Common myeloid progenitor, CD34-positive (primary cell): ENCODE measurements at regions of chr17 and their contacts with region 1.

Region 1: DNA sequence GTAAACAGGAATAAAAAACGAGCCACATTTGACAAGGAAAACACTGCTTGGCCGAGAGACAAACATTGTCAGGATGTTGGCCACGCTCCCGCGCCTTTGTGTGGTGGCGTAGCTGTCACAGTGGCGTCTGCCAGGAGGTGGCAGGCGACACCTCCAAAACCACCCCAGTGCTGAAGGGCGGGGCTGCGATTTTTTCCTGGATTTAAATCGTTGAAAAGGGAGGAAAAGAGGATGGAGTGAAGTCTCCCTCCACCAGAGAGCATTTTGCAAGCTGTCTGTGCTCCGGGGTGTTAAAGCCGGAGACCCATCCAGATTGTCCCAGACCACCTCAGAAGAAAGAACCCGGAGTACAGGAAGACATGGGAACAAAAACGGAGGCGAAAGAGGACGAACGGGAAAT is 12.7 kb downstream of the MRM3 start:
- DNase-seq: peak; percentile 54 to 65 (median 60)
- H3K4me3 ChIP-seq: peak overlapping the region in 1 of 7 experiments; percentile 31
- H3K27ac ChIP-seq: no peak overlapping the region
- H3K4me1 ChIP-seq: peaks cover 0 to 7% (median 0%) of the 10 kb centered on the region in 4 experiments
- H3K27me3 ChIP-seq: peaks cover 0 to 2% (median 0%) of the 10 kb centered on the region in 5 experiments

Region 2: GRCh38 chr17:814371-814770 is 19.5 kb after region 1 on chr17:
- CTCF ChIA-PET with region 1: no interaction called
- POLR2A ChIA-PET with region 1: no interaction called
- DNase-seq: no peak
- H3K4me3 ChIP-seq: no peak overlapping the region
- H3K27ac ChIP-seq: no peak overlapping the region
- H3K4me1 ChIP-seq: no peaks in the 10 kb centered on the region
- H3K27me3 ChIP-seq: peaks cover 0 to 4% (median 0%) of the 10 kb centered on the region in 5 experiments

Region 3: GRCh38 chr17:879549-880442 is 84.9 kb after region 1 on chr17:
- CTCF ChIA-PET with region 1: interaction called, 11 read pairs
- POLR2A ChIA-PET with region 1: no interaction called
- DNase-seq: peak; percentile 83 to 89 (median 88)
- H3K4me3 ChIP-seq: no peak overlapping the region
- H3K27ac ChIP-seq: no peak overlapping the region
- H3K4me1 ChIP-seq: peaks cover 0 to 23% (median 8%) of the 10 kb centered on the region in 4 experiments
- H3K27me3 ChIP-seq: peaks cover 0 to 6% (median 0%) of the 10 kb centered on the region in 5 experiments

Region 4: DNA sequence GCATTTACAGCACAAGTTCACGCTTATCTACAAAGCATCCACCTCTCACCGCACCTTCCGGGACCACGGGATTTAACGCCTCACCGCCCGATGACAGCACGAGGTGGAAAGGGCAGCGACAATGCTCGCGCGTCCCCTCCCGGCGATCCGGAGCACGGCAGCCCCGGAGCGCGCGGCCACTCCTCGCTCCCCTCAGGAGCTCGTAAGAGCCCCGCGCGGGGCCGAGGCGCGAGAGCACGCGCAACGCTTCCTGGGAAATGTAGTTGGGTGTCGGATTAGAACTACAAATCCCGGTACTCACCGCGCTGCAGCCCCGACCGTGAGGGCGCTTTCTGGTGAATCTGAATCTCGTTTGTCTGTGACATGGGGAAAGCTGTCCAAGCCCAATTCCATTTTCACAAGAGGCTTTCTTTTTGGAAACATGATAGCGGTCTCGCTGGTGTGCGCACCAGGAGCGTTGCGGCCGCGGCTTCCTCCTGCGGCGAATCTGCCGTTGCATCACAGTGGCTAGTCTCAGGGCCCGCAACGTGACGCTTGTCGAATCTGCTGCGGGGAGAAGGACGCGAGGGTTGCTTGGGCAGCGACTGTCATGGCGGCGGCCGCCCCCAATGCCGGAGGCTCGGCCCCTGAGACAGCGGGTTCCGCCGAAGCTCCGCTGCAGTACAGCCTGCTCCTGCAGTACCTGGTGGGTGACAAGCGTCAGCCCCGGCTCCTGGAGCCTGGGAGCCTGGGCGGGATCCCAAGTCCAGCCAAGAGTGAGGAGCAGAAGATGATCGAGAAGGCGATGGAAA is 201.9 kb after region 1 on chr17 and contains the start of gene TIMM22:
- CTCF ChIA-PET with region 1: interaction called, 20 read pairs
- POLR2A ChIA-PET with region 1: no interaction called
- DNase-seq: peak; percentile 98 to 99 (median 99)
- H3K4me3 ChIP-seq: peak within 1 kb of the TSS; percentile 85 to 100 (median 97)
- H3K27ac ChIP-seq: peak within 1 kb of the TSS; percentile 80 to 92
- H3K4me1 ChIP-seq: peaks cover 8 to 17% (median 12%) of the 10 kb centered on the region in 4 experiments
- H3K27me3 ChIP-seq: no peaks in the 10 kb centered on the region